Posterior vena cava (tissue), 2 donors: ENCODE measurements at regions of chr22 and their contacts with region 1.

Region 1: GRCh38 chr22:19741053-19741452 is 17.7 kb downstream of the GP1BB start:
- DNase-seq: no peak

Region 2: GRCh38 chr22:19765477-19766239 is 24.6 kb after region 1 on chr22:
- intact Hi-C with region 1: loop called in 1 of 2 experiments (anchors 1 kb)
- DNase-seq: no peak